GM12878 (cell line): ENCODE measurements at regions of chrX and their contacts with region 1.

Region 1: DNA sequence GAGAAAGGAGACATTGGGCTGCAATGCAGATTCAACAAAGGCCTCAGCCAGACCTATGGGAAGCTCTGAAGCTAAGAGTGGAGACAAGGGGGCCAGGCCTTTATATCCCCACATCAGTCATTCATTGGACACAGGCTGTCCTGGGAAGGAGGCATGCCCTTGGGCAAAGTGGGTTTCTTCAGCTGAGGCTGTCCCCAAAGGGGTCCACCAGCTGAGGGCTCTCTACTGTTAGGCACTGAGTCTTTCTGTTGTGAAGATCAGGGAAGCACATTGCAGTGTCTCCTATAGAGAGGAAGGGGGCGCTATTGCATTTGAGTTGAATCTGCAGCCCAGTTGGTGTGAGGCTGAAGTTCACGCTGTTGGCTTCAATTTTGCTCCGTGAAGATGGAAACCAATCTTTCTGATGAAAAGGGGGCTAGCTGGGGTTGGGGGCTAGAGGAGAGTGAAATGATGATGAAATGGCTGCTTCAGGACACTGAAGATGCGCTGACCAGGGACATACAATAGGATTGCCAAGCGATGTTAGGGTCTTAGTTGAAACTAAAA is 48.0 kb downstream of the SLC25A5 start:
- DNase-seq: peak; percentile 39
- ATAC-seq: peak; percentile 95
- H3K4me3 ChIP-seq: no peak overlapping the region
- H3K27ac ChIP-seq: no peak overlapping the region
- H3K4me1 ChIP-seq: no peaks in the 10 kb centered on the region; the same call in 1 of the 2 replicates
- H3K27me3 ChIP-seq: no peaks in the 10 kb centered on the region
- CTCF ChIP-seq: peak; percentile 91 to 99 (median 93); a peak in 5 of 6 replicates
- EP300 ChIP-seq: no peak
- POLR2A ChIP-seq: no peak
- RAD21 ChIP-seq: peak; percentile 92

Region 2: DNA sequence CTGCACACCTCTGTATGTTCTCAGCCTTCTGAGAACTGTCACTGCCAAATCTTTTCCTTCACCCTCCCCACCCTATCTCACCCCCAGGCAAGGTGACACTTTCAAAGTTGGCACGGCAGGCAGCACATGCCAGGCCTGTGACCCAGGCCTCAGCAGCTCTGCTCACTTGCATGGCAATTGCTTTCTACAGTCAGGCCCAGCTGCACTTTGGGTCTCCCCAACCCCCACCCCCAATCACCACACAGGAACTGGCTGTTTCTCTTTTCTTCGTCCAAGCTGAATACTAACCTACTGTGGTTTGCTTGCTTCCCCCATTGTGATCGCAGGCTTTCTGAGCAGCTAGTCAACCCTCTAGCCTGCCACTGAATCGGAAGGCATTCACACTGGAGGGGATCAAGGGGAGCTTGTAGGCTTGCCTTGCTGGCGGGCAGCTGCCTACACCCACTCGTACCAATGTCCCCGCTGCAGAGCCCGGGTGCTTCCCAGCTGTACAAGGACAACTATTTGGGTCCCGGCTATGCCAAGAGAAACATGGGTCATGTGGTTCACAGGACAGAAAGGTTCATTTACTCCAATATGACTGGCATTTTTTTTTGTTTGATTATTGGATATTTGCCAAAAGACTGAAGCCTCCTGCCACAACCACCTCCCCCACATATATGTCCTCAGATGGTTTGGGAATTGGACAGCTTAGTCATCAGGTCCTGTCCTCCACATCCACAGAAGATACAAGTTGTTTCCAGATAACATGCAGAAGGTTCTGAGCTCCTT is 89.0 kb before region 1 on chrX:
- CTCF ChIA-PET with region 1: no interaction called
- POLR2A ChIA-PET with region 1: no interaction called
- RAD21 ChIA-PET with region 1: no interaction called
- SMC1A ChIA-PET with region 1: no interaction called
- in situ Hi-C with region 1: no loop called
- intact Hi-C with region 1: no loop called
- DNase-seq: peak; percentile 28
- ATAC-seq: peak; percentile 73
- H3K4me3 ChIP-seq: no peak overlapping the region
- H3K27ac ChIP-seq: peak overlapping the region; percentile 70
- H3K4me1 ChIP-seq: peaks cover 13% of the 10 kb centered on the region
- H3K27me3 ChIP-seq: no peaks in the 10 kb centered on the region
- CTCF ChIP-seq: no peak
- EP300 ChIP-seq: no peak
- POLR2A ChIP-seq: no peak
- RAD21 ChIP-seq: no peak

Region 3: GRCh38 chrX:119468930-119469635 is 47.1 kb before region 1 on chrX:
- CTCF ChIA-PET with region 1: interaction called, 10 read pairs
- POLR2A ChIA-PET with region 1: no interaction called
- RAD21 ChIA-PET with region 1: interaction called, 15 read pairs
- SMC1A ChIA-PET with region 1: no interaction called
- in situ Hi-C with region 1: no loop called
- intact Hi-C with region 1: no loop called
- DNase-seq: peak; percentile 35
- ATAC-seq: peak; percentile 84
- H3K4me3 ChIP-seq: peak overlapping the region; percentile 81
- H3K27ac ChIP-seq: peak overlapping the region; percentile 82
- H3K4me1 ChIP-seq: no peaks in the 10 kb centered on the region; the same call in 1 of the 2 replicates
- H3K27me3 ChIP-seq: no peaks in the 10 kb centered on the region
- CTCF ChIP-seq: peak; percentile 61 to 81 (median 64); a peak in 5 of 6 replicates
- EP300 ChIP-seq: no peak
- POLR2A ChIP-seq: no peak; the same call in 1 of the 2 replicates
- RAD21 ChIP-seq: peak; percentile 56

Region 4: DNA sequence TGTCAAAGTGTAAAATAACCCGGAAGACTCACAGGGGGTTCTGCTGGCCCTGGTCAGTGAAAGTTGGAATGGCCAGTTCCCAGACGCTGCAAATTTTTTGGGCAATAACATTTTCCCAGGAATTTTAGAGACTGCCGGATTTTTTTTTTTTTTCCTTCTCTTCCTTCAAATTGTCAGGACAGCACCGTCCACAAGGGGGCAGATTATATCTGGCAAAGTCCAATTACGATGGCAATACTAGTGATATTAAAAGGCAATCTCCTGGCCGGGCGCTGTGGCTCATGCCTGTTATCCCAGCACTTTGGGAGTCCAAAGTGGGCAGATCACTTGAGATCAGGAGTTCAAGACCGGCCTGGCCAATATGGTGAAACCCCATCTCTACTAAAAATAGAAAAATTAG is 27.5 kb before region 1 on chrX:
- CTCF ChIA-PET with region 1: interaction called, 59 read pairs
- POLR2A ChIA-PET with region 1: no interaction called
- RAD21 ChIA-PET with region 1: interaction called, 16 read pairs
- SMC1A ChIA-PET with region 1: interaction called, 9 read pairs
- in situ Hi-C with region 1: no loop called
- intact Hi-C with region 1: no loop called
- DNase-seq: no peak
- ATAC-seq: peak; percentile 64
- H3K4me3 ChIP-seq: no peak overlapping the region
- H3K27ac ChIP-seq: no peak overlapping the region
- H3K4me1 ChIP-seq: no peaks in the 10 kb centered on the region
- H3K27me3 ChIP-seq: no peaks in the 10 kb centered on the region
- CTCF ChIP-seq: peak; percentile 50 to 60 (median 58)
- EP300 ChIP-seq: no peak
- POLR2A ChIP-seq: no peak
- RAD21 ChIP-seq: peak; percentile 51; the same call in 1 of the 2 replicates

Region 5: DNA sequence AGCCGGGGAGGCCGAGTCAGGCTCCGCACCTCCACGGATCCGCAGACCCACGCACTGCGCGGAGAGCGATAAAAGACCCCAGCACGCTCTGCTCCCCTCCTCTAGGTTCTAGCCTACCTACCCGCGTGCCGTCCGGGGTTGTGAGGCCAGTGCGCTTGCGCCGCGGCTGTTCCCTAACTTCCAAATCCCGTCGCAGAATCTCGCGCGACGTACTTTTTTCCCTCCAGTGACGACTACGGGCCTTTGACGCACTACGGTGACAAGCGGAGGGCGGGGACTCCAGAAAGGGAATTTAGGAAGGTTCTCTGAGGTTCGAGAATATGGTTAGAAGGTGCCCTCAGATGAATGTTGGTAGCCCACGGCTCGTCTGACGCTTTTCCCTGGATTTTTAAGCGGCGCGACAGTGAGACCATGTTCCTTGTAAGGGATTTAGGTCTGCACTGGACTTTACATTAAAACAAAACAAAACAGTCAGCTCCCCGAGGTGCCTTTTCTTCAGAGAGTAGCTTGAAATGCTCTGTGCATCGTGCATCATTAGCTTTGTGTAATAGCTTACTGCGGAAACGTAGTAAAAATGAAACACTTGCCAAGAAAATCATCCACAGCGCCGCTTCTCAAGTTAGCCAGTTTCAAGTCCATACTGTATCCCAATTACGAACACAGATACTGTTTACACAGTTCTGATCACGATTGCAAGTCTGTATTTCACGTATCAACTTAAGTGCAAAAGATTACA is 90.2 kb after region 1 on chrX and contains the start of gene NKRF:
- CTCF ChIA-PET with region 1: interaction called, 16 read pairs
- POLR2A ChIA-PET with region 1: no interaction called
- RAD21 ChIA-PET with region 1: interaction called, 10 read pairs
- SMC1A ChIA-PET with region 1: interaction called, 12 read pairs
- in situ Hi-C with region 1: no loop called
- intact Hi-C with region 1: no loop called
- DNase-seq: peak; percentile 78
- ATAC-seq: peak; percentile 78
- H3K4me3 ChIP-seq: peak within 1 kb of the TSS; percentile 57
- H3K27ac ChIP-seq: peak within 1 kb of the TSS; percentile 85
- H3K4me1 ChIP-seq: no peaks in the 10 kb centered on the region; the same call in 1 of the 2 replicates
- H3K27me3 ChIP-seq: no peaks in the 10 kb centered on the region
- CTCF ChIP-seq: no peak
- EP300 ChIP-seq: no peak
- POLR2A ChIP-seq: peak; percentile 93
- RAD21 ChIP-seq: no peak
- polyA plus RNA-seq, gene NKRF: 6.2 to 9.5 TPM

Region 6: GRCh38 chrX:119753571-119754257 is 237.5 kb after region 1 on chrX:
- CTCF ChIA-PET with region 1: interaction called, 18 read pairs
- POLR2A ChIA-PET with region 1: no interaction called
- RAD21 ChIA-PET with region 1: interaction called, 9 read pairs
- SMC1A ChIA-PET with region 1: interaction called, 8 read pairs
- in situ Hi-C with region 1: no loop called
- intact Hi-C with region 1: loop called (anchors 2 kb)
- DNase-seq: no peak
- ATAC-seq: peak; percentile 8; the same call in 1 of the 3 replicates
- H3K4me3 ChIP-seq: no peak overlapping the region
- H3K27ac ChIP-seq: peak overlapping the region; percentile 67
- H3K4me1 ChIP-seq: peaks cover 32% of the 10 kb centered on the region
- H3K27me3 ChIP-seq: no peaks in the 10 kb centered on the region
- CTCF ChIP-seq: peak; percentile 53 to 66 (median 61)
- EP300 ChIP-seq: no peak
- POLR2A ChIP-seq: no peak
- RAD21 ChIP-seq: peak; percentile 68

Region 7: DNA sequence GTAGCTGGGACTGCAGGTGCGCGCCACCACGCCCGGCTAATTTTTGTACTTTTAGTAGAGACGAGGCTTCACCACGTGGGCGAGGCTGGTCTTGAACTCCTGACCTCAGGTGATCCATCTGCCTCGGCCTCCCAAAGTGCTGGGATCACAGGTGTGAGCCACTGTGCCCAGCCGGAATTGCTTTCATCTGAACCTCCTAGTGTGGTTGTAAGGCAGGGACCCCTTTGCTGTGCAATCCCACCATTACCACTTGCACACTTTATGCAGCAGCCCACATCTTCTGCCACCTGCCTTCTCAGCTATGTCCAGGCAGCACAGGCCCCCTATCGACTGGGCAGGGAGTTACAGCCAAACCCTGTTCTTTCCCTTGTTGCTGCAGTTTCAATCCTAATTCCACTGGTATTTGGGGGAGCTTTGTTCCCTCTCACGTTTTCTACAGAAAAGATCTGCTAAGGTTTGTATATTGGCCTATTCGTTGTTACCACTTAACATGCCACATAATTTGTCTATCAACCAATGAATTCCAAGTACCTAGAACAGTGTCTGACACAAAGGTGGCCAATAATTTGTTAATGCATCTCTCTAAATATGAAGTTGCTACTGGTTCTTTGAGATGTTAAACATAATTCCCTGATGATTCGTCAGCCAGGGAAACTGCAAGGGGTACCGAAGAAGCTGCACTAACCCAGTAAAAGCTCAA is 268.7 kb after region 1 on chrX:
- CTCF ChIA-PET with region 1: interaction called, 18 read pairs
- POLR2A ChIA-PET with region 1: no interaction called
- RAD21 ChIA-PET with region 1: interaction called, 6 read pairs
- SMC1A ChIA-PET with region 1: interaction called, 5 read pairs
- in situ Hi-C with region 1: loop called (anchors 5 kb)
- intact Hi-C with region 1: no loop called
- DNase-seq: no peak
- ATAC-seq: peak; percentile 78
- H3K4me3 ChIP-seq: no peak overlapping the region
- H3K27ac ChIP-seq: no peak overlapping the region
- H3K4me1 ChIP-seq: no peaks in the 10 kb centered on the region
- H3K27me3 ChIP-seq: no peaks in the 10 kb centered on the region
- CTCF ChIP-seq: peak; percentile 68 to 91 (median 72)
- EP300 ChIP-seq: no peak
- POLR2A ChIP-seq: peak; percentile 51; the same call in 1 of the 2 replicates
- RAD21 ChIP-seq: peak; percentile 55